Activated CD8-positive, alpha-beta memory T cell treated with anti-CD3 and anti-CD28 coated beads, Interleukin-2, amount 10 ng/mL, durations not matched to agents 7 days and 5 days (primary cell): ENCODE measurements at regions of chr19 and their contacts with region 1.

Region 1: GRCh38 chr19:38842439-38843174 is 7.2 kb downstream of the HNRNPL start:
- DNase-seq: peak; percentile 91
- ATAC-seq: peak; percentile 89
- H3K4me3 Mint-ChIP-seq: peak overlapping the region; percentile 65
- H3K27ac Mint-ChIP-seq: peak overlapping the region; percentile 90
- H3K4me1 Mint-ChIP-seq: peaks cover 83% of the 10 kb centered on the region
- H3K27me3 Mint-ChIP-seq: no peaks in the 10 kb centered on the region

Region 2: GRCh38 chr19:38729653-38730469 is 112.7 kb before region 1 on chr19:
- CTCF ChIA-PET with region 1: no interaction called
- DNase-seq: peak; percentile 83
- ATAC-seq: peak; percentile 65
- H3K4me3 Mint-ChIP-seq: no peak overlapping the region
- H3K27ac Mint-ChIP-seq: peak overlapping the region; percentile 52
- H3K4me1 Mint-ChIP-seq: peaks cover 34% of the 10 kb centered on the region
- H3K27me3 Mint-ChIP-seq: no peaks in the 10 kb centered on the region

Region 3: GRCh38 chr19:38815059-38816001 is 27.3 kb before region 1 on chr19:
- CTCF ChIA-PET with region 1: no interaction called
- DNase-seq: no peak
- ATAC-seq: no peak
- H3K4me3 Mint-ChIP-seq: no peak overlapping the region
- H3K27ac Mint-ChIP-seq: no peak overlapping the region
- H3K4me1 Mint-ChIP-seq: peaks cover 1% of the 10 kb centered on the region
- H3K27me3 Mint-ChIP-seq: no peaks in the 10 kb centered on the region

Region 4: GRCh38 chr19:38831142-38831605 is 11.4 kb before region 1 on chr19:
- CTCF ChIA-PET with region 1: interaction called, 13 read pairs
- DNase-seq: peak; percentile 75
- ATAC-seq: peak; percentile 41
- H3K4me3 Mint-ChIP-seq: peak overlapping the region; percentile 93
- H3K27ac Mint-ChIP-seq: peak overlapping the region; percentile 95
- H3K4me1 Mint-ChIP-seq: peaks cover 22% of the 10 kb centered on the region
- H3K27me3 Mint-ChIP-seq: no peaks in the 10 kb centered on the region